CD14-positive monocyte (primary cell): ENCODE measurements at regions of chr17 and their contacts with region 1.

Region 1: DNA sequence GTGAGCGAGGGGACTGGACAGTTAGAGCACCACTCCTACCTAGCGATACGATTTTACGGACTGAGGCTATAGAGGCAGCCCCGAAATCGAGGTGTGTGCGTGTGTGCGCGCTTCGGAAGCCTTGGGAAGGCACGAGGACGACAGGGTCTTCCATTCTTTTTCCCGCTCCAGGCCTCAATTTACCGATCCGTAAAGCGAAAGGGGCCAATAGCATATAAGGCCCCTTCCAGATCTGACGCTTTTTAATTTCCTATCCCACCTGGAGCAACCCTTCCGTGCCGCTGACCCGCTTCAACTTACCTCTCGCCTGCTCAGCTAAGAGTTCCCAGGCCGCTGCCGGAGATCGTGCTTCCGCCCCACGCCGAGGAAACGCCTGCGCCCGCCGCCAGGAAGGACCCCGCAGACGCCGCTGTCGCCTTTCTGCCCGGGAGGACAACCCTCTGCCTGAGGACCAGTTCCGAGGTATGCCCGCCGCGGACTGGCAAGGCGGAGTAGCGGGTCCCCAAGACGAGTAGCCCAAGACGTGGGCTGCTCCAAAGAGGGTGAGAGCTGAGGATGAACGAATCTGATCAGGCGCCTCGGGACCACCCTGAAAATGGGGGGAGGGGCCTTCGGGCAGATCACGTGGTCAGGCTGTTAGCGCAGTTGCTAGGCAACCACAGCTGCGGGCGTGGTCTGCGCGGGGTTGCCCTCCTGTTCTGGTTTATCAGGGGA is at the start of gene EFTUD2:
- DNase-seq: peak; percentile 85 to 89 (median 87)
- H3K4me3 ChIP-seq: peak within 1 kb of the TSS; percentile 91 to 97 (median 95)
- H3K4me3 Mint-ChIP-seq: peak within 1 kb of the TSS; percentile 86 to 96
- H3K27ac ChIP-seq: peak within 1 kb of the TSS; percentile 96 to 98
- H3K27ac Mint-ChIP-seq: peak within 1 kb of the TSS; percentile 99 to 100 (median 100)
- H3K4me1 ChIP-seq: peaks cover 38 to 42% of the 10 kb centered on the region in 2 donors
- H3K4me1 Mint-ChIP-seq: peaks cover 35% of the 10 kb centered on the region
- H3K27me3 ChIP-seq: no peaks in the 10 kb centered on the region
- H3K27me3 Mint-ChIP-seq: no peaks in the 10 kb centered on the region
- CTCF ChIP-seq: no peak
- polyA plus RNA-seq, gene EFTUD2: 82.9 to 144 (median 104) TPM

Region 2: DNA sequence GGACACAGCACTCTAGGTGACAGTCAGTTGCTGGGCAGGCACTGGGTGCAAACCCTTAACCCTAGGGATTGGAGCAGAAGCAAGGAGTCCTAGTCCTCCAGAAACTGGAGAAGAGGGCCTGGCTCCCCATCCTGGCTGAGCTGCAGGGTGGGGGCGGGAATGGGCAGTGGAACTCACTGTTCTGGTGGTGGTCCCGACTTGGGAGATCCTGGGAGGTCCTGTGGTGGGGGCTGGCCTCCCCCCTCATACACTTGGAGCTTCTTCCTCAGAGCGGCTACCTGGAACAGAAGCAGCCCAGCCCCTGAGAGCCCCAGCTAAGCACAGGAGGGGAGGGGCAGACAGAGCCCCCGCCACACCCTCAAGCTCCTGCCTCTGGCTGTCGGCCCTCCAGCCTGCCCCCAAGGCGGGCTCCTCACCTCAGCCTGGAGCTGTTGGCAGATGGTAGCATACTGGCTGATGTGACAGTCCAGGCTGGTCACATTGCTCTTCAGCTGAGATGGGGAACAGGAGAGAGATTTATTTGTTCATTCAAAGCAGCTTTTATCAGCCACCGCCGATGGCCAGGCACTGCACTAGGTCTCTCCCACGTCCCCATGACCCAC is 33.4 kb after region 1 on chr17:
- intact Hi-C with region 1: no loop called
- DNase-seq: no peak
- H3K4me3 ChIP-seq: no peak overlapping the region
- H3K4me3 Mint-ChIP-seq: no peak overlapping the region
- H3K27ac ChIP-seq: no peak overlapping the region
- H3K27ac Mint-ChIP-seq: no peak overlapping the region
- H3K4me1 ChIP-seq: no peaks in the 10 kb centered on the region
- H3K4me1 Mint-ChIP-seq: no peaks in the 10 kb centered on the region
- H3K27me3 ChIP-seq: no peaks in the 10 kb centered on the region
- H3K27me3 Mint-ChIP-seq: no peaks in the 10 kb centered on the region
- CTCF ChIP-seq: no peak

Region 3: GRCh38 chr17:45051060-45051719 is 152.0 kb after region 1 on chr17 and contains the start of gene DCAKD:
- intact Hi-C with region 1: loop called in 1 of 2 experiments (anchors 10 kb)
- DNase-seq: peak; percentile 89 to 91 (median 90)
- H3K4me3 ChIP-seq: peak within 1 kb of the TSS; percentile 59 to 83 (median 81)
- H3K4me3 Mint-ChIP-seq: peak within 1 kb of the TSS; percentile 77 to 88
- H3K27ac ChIP-seq: peak within 1 kb of the TSS; percentile 43 to 79
- H3K27ac Mint-ChIP-seq: peak within 1 kb of the TSS; percentile 83 to 91 (median 90)
- H3K4me1 ChIP-seq: peaks cover 16 to 21% of the 10 kb centered on the region in 2 donors
- H3K4me1 Mint-ChIP-seq: peaks cover 25% of the 10 kb centered on the region
- H3K27me3 ChIP-seq: no peaks in the 10 kb centered on the region
- H3K27me3 Mint-ChIP-seq: peaks cover 0 to 2% (median 0%) of the 10 kb centered on the region in 3 donors
- CTCF ChIP-seq: no peak
- polyA plus RNA-seq, gene DCAKD: 6.6 to 10.0 (median 8.7) TPM